Right ventricle myocardium inferior (tissue), 1 donor: ENCODE measurements at regions of chr4 and their contacts with region 1.

Region 1: DNA sequence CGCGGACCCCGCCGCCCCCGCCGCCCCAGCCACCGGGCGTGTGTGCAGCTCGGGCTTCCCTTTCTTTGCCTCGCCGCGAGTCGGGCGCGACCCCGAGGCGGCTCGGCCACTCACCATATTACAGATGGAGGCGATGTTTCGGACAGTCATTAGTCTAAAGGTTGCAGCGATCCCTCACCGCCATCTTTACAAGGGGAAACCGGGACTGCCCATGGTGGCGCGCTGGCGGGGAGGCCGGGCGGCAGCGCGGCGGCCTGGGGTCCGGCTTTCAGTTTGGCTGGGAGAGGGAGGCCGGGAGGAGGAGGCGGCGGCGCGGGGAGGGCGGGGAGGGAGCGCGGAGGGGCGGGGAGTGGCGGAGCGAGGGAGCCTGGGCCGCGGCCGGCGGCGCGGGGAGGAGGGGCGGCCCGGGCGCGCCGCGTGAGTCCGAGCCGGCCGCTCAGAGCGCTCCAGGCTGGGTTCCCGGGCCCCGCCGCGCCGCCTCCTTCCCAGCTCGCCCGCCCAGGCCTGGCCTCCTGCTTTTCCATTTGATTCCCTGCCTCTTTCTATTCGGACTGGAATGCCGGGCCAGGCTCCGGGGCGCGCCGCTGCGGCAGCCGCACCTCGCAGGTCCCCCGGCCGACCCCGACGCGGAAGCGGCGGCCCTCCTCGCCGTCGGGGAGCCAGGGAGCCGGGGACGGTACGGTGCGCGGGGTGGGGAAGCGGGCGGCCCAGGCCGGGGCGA is at the start of gene USP46:
- DNase-seq: peak; percentile 86
- ATAC-seq: peak; percentile 95
- total RNA-seq, gene USP46: 65.1 TPM

Region 2: DNA sequence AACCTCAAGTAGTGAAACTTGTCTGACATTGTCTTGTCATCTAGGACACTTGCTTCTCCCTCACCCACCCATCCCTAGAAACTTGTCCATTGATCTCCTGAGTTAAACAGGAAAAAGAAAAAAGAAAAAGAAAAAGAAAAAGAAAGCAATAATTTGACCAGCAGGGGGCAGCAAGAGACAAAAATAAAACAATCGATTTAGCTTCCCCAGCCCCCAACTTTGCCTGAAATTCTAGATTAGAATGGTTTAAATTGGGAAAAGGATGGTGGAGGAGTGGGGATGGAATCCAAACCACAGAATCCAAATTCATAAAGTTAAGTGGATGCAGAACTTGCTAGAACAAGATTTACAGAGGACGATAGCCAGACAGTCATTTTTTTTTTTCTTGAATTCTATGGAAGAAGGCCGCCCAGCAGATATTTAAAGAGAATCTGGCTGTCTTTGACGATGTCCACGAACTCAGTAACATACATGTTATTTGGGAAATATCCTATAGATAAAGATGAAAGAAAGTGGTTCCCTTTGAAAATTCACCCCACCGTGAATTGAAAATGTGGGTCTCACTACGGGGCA is 282.9 kb before region 1 on chr4:
- intact Hi-C with region 1: loop called (anchors 10 kb)
- DNase-seq: no peak
- ATAC-seq: no peak

Region 3: DNA sequence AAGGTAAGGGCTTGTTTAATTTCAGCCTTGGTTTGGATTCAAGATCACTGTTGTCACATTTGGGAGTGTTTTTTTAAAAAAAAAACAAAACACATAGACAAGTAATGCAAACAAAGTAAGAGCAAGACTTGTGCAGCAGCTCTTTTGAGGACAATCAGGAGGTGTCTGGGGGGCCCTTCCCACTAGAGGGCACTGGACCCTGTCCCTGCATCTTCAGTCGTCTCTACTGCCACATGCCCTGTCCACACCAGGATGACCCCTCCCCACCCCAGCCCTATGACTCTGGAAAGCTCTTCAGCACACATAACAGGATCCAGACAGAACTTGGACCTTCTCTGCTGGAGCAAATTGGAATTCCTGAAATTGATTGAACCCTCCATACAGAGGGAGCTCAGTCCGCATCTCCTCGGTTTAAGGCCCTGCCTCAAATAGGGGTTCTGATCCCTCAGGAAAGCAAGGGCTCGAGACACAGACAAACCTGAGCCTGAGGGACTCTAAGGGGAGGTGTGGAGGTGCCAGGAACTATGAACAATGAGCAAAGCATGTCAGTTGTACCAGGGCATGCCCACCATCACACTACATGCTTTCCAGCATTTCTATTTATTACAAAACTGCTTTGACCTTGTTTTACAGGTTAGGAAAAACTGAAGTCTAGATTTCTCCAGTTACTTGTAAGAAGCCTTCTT is 70.9 kb before region 1 on chr4:
- intact Hi-C with region 1: loop called (anchors 2 kb)
- DNase-seq: no peak
- ATAC-seq: peak; percentile 44

Region 4: DNA sequence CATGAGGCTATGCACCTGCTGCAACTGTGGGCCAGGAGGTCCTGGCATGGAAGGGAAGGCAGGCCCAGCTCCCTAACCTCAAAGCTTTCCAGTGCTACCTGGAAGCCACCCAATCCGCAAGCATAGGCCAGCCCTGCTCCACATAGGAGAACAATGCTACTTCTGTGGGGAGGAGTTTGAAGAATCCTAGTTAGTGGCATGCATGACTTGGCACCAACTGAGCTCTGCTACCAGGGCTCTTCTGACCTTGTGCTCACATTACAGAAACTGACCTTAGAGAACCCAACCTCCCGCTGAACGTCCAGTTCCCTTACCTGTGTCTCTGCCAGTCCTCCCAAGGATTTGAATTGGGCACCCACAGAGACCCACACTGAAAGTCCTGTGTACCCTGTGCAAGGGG is 58.9 kb before region 1 on chr4:
- intact Hi-C with region 1: loop called (anchors 5 kb)
- DNase-seq: peak; percentile 65
- ATAC-seq: peak; percentile 89

Region 5: GRCh38 chr4:52670739-52671138 is 11.6 kb after region 1 on chr4:
- intact Hi-C with region 1: no loop called
- DNase-seq: no peak
- ATAC-seq: no peak

Region 6: GRCh38 chr4:52712172-52712990 is 53.2 kb after region 1 on chr4:
- intact Hi-C with region 1: loop called (anchors 2 kb)
- DNase-seq: peak; percentile 98
- ATAC-seq: peak; percentile 99

Region 7: DNA sequence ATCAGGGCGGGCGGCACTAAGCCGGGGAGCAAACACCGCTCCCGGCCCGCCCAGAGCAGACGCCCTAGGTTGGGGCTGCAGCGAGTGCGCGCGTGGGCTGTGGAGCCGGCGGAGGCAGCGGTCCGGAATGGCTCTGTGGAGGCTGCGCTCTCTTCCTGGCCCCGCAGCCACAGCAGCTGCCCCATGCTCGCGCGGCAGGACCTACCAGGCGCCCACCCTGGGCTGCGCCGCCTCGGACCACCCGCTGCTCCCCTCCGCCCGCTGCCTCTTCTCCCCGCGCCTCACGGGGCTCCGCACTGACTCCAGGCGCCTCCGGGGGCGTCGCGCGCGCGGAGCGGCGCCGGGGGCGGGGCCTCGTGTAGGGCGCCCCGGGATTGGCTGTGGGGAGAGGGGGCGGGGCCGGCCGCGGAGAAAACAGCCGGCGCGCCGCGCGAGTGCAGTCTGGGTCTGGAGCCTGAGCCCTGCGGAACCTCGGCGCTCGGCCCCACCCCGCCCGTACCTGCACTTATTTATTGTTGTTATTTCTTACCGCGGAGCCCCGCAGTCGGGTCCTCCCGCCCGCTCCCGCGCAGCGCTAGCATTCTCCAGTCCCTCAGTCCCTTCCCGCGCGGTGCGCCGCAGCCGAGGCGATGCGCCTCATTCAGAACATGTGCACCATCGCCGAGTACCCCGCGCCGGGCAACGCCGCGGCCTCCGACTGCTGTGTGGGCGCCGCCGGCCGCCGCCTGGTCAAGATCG is 202.9 kb after region 1 on chr4 and contains the start of gene RASL11B:
- intact Hi-C with region 1: loop called (anchors 5 kb)
- DNase-seq: peak; percentile 90
- ATAC-seq: peak; percentile 99
- total RNA-seq, gene RASL11B: 3.7 TPM

Region 8: GRCh38 chr4:52983563-52984303 is 324.6 kb after region 1 on chr4:
- intact Hi-C with region 1: loop called (anchors 5 kb)
- DNase-seq: no peak
- ATAC-seq: peak; percentile 78